GM10248 (cell line): ENCODE measurements at regions of chr11 and their contacts with region 1.

Region 1: GRCh38 chr11:5891216-5891800 is 1.7 kb upstream of the OR52E5 start:
- DNase-seq: no peak
- CTCF ChIP-seq: no peak

Region 2: DNA sequence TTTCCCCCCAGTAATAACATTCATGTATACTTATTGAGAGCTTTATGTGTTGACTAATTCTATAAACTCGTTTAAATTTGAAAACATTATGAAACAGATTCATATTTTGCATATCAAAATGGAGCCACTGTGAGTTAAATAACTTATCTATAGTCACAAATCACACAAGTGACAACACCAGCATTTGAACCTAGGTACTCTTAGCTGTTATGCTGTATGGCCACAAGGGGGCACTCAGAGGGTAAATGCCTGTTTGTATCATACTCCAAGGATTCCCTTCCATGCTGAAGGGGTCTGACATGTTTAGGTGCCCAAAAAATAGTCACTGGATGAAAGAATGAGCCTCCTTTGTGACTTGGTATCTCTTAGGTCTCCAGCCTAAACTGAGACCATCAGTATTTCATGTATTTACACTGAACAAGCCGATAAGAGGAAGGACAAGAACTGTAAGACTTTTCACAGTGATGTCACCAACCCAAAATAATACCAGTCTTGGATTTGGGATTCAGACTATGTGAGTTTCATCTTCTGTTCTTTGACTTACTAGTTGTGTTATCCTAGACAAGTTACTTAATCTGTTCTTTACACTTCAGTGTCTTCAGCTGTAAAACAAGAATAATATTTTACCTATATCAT is 415.0 kb before region 1 on chr11:
- CTCF ChIA-PET with region 1: interaction called, 12 read pairs
- POLR2A ChIA-PET with region 1: no interaction called
- DNase-seq: peak; percentile 68
- CTCF ChIP-seq: peak; percentile 83